MCF 10A (cell line): ENCODE measurements at regions of chr16 and their contacts with region 1.

Region 1: DNA sequence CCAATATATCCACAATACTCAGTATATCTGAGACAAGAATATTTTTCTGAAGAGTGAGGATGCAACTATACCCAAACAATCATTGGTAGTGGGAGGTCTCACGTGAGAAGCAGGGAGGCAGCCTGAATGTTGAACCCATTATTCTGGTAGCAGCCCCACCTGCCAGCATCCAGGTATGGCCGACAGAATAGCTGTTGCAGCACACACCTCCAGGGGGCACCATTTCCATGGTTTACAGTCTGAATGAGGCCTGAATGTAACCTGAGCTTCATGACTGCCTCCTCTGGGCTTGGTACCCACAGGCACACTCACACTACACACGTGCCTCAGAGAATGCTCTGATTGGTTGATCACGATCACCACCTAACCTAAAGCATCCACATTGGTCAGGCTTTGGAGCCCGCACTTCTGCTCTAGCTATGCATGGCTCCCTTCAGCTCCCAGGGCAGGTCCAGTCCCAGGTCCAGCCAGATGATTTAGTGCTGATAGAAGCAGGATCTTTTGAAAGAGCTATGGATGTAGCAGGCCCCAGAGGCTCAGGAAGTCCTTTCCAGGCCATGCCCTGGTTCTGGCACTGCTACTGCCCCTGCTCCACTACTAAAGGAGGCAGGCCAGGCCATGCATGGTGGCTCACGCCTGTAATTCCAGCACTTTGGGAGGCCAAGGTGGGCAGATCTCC is 11.0 kb upstream of the CBFB start:
- DNase-seq: peak; percentile 97
- H3K4me3 Mint-ChIP-seq: no peak overlapping the region
- H3K27ac Mint-ChIP-seq: no peak overlapping the region
- H3K4me1 Mint-ChIP-seq: no peaks in the 10 kb centered on the region
- H3K27me3 Mint-ChIP-seq: no peaks in the 10 kb centered on the region
- CTCF ChIP-seq: peak; percentile 63

Region 2: DNA sequence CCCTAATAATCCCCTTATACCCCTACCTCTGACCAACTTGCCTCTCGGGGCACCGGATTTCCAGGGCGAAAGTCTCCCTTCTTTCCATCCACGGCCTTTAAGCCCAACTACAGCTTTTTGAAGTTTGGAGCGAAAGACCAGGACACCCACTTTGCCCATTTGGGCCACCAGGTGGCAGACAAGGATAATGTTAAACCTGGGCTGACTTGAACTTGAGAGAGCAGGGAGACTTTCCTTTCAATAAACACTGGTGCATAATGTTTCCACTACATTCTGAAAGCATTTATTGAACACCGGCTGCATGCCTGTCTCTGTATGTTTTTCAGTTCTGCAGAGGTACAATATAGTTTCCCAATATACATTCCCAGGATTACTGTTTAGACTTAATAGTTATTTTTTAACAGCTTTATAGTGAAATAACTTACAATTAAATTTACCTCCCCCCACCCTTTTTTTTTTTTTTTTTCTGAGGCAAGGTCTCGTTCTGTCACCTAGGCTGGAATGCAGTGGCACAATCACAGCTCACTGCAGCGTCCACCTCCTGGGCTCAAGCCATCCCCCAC is 63.8 kb before region 1 on chr16:
- CTCF ChIA-PET with region 1: interaction called, 4 read pairs
- POLR2A ChIA-PET with region 1: no interaction called
- intact Hi-C with region 1: loop called (anchors 10 kb)
- DNase-seq: peak; percentile 88
- H3K4me3 Mint-ChIP-seq: peak overlapping the region; percentile 51
- H3K27ac Mint-ChIP-seq: peak overlapping the region; percentile 70
- H3K4me1 Mint-ChIP-seq: peaks cover 17% of the 10 kb centered on the region
- H3K27me3 Mint-ChIP-seq: no peaks in the 10 kb centered on the region
- CTCF ChIP-seq: peak; percentile 67

Region 3: GRCh38 chr16:66970775-66971725 is 46.9 kb before region 1 on chr16:
- CTCF ChIA-PET with region 1: interaction called, 11 read pairs
- POLR2A ChIA-PET with region 1: no interaction called
- intact Hi-C with region 1: no loop called
- DNase-seq: peak; percentile 30
- H3K4me3 Mint-ChIP-seq: no peak overlapping the region
- H3K27ac Mint-ChIP-seq: no peak overlapping the region
- H3K4me1 Mint-ChIP-seq: no peaks in the 10 kb centered on the region
- H3K27me3 Mint-ChIP-seq: no peaks in the 10 kb centered on the region
- CTCF ChIP-seq: no peak

Region 4: GRCh38 chr16:66996324-66996982 is 21.5 kb before region 1 on chr16:
- CTCF ChIA-PET with region 1: no interaction called
- POLR2A ChIA-PET with region 1: no interaction called
- intact Hi-C with region 1: no loop called
- DNase-seq: peak; percentile 83
- H3K4me3 Mint-ChIP-seq: no peak overlapping the region
- H3K27ac Mint-ChIP-seq: peak overlapping the region; percentile 2
- H3K4me1 Mint-ChIP-seq: peaks cover 11% of the 10 kb centered on the region
- H3K27me3 Mint-ChIP-seq: no peaks in the 10 kb centered on the region
- CTCF ChIP-seq: no peak

Region 5: GRCh38 chr16:67006930-67007658 is 10.9 kb before region 1 on chr16:
- CTCF ChIA-PET with region 1: interaction called, 11 read pairs
- POLR2A ChIA-PET with region 1: interaction called, 4 read pairs
- intact Hi-C with region 1: no loop called
- DNase-seq: peak; percentile 52
- H3K4me3 Mint-ChIP-seq: no peak overlapping the region
- H3K27ac Mint-ChIP-seq: no peak overlapping the region
- H3K4me1 Mint-ChIP-seq: peaks cover 7% of the 10 kb centered on the region
- H3K27me3 Mint-ChIP-seq: no peaks in the 10 kb centered on the region
- CTCF ChIP-seq: no peak

Region 6: GRCh38 chr16:67028555-67029248 is 10.8 kb after region 1 on chr16 and contains the start of gene CBFB:
- CTCF ChIA-PET with region 1: interaction called, 13 read pairs
- POLR2A ChIA-PET with region 1: interaction called, 7 read pairs
- intact Hi-C with region 1: no loop called
- DNase-seq: peak; percentile 87
- H3K4me3 Mint-ChIP-seq: peak within 1 kb of the TSS; percentile 76
- H3K27ac Mint-ChIP-seq: peak within 1 kb of the TSS; percentile 35
- H3K4me1 Mint-ChIP-seq: no peaks in the 10 kb centered on the region
- H3K27me3 Mint-ChIP-seq: no peaks in the 10 kb centered on the region
- CTCF ChIP-seq: no peak
- total RNA-seq, gene CBFB: 87.1 and 105 TPM in 2 replicates

Region 7: GRCh38 chr16:67100569-67101310 is 82.8 kb after region 1 on chr16:
- CTCF ChIA-PET with region 1: interaction called, 34 read pairs
- POLR2A ChIA-PET with region 1: interaction called, 4 read pairs
- intact Hi-C with region 1: loop called (anchors 1 kb)
- DNase-seq: no peak
- H3K4me3 Mint-ChIP-seq: no peak overlapping the region
- H3K27ac Mint-ChIP-seq: no peak overlapping the region
- H3K4me1 Mint-ChIP-seq: peaks cover 4% of the 10 kb centered on the region
- H3K27me3 Mint-ChIP-seq: no peaks in the 10 kb centered on the region
- CTCF ChIP-seq: peak; percentile 24

Region 8: DNA sequence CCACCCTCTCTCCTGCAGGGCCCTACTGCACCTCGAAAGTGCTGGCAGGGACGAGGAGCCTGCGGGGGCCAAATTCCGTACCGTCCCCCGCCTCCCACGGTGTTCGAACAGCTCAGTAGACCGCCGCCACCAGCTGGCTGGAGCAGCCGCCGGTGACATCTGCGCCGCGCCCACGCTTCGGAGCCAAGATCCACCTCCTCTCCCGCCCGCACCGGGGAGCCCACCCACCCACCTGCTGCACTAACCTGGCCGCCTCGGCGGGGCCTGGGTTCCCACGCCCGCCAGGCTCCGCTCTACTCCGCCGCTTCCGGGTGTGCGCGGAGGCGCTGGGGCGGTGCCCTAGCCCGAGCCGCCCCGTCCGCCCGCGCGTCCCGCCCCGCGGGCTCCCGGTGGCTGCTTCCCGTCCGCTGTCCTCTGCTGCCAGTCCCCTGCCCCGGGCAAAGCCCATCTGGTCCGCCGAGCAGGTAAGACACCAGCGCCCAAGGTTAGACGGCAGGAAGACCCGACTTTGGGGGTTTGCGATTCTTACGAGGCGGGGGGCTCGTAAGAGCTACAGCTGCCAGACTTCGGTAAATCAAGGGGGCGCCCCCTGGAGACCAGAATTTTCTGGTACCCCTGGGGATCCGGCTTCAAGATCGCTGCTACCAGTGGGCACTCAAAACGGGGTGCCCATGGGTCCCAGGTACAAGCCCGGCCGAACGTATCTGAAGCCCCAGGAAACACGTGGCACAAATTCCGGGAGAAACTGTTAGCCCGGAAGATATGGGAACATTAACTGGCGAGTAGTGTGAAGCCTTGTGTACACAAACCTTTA is 141.9 kb after region 1 on chr16 and contains the starts of genes FBXL8 and TRADD:
- CTCF ChIA-PET with region 1: interaction called, 6 read pairs
- POLR2A ChIA-PET with region 1: interaction called, 4 read pairs
- intact Hi-C with region 1: loop called (anchors 1 kb)
- DNase-seq: peak; percentile 70
- H3K4me3 Mint-ChIP-seq: peak within 1 kb of the TSS; percentile 84
- H3K27ac Mint-ChIP-seq: peak within 1 kb of the TSS; percentile 63
- H3K4me1 Mint-ChIP-seq: peaks cover 9% of the 10 kb centered on the region
- H3K27me3 Mint-ChIP-seq: no peaks in the 10 kb centered on the region
- CTCF ChIP-seq: peak; percentile 56
- total RNA-seq, gene FBXL8: 15.9 and 17.2 TPM in 2 replicates
- total RNA-seq, gene TRADD: 12.9 and 13.3 TPM in 2 replicates

Region 9: DNA sequence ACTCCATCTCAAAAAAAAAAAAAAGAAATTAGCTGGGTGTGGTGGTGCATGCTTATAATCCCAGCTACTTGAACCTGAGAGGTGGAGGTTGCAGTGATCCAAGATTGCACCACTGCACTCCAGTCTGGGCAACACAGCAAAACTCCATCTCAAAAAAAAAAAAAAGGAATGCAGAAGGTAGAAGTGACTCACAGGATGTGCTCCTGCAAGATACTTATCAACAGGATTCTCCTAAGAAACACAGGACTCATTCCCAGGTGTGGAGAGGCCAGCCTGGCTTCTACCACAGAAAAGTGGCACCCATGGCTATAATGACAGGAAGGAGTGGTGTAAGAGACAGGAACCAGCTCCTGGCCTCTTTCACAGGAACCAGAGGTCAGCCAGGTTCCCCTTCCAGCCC is 194.8 kb after region 1 on chr16:
- CTCF ChIA-PET with region 1: no interaction called
- POLR2A ChIA-PET with region 1: no interaction called
- intact Hi-C with region 1: no loop called
- DNase-seq: peak; percentile 66
- H3K4me3 Mint-ChIP-seq: peak overlapping the region; percentile 39
- H3K27ac Mint-ChIP-seq: peak overlapping the region; percentile 69
- H3K4me1 Mint-ChIP-seq: peaks cover 25% of the 10 kb centered on the region
- H3K27me3 Mint-ChIP-seq: no peaks in the 10 kb centered on the region
- CTCF ChIP-seq: no peak